Naive thymus-derived CD4-positive, alpha-beta T cell (primary cell): ENCODE measurements at regions of chr7 and their contacts with region 1.

Region 1: DNA sequence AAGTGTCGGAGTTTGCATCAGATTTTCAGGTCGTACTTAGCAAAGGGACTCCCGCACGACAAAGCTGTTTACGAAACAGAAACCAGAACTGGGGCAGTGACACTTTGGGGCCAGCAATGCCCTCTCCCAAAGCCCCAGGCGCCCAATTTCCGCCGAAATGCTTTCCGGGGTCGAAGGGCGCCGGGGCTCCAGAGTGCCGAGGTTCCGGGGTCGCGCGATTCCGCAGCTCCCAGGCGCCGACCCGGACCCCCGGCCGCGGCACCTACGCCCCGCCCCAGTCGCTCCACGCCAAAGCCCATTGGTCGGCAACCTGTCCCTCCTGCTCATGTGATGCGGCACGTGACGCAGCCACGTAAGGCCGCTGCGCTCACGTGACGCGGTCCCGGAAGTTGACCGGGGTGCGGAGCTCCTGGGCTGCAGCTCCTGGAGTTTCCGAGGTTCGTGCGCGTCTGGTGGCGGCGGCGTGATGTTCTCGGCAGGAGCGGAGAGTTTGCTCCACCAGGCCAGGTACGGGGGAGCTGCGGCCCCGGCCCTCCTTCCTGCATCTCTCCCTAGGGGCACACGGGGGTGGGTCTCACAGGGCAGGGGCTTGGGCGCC is at the start of gene AP5Z1:
- DNase-seq: peak; percentile 85 to 95 (median 94)
- ATAC-seq: peak; percentile 95
- H3K4me3 ChIP-seq: peak within 1 kb of the TSS; percentile 95
- H3K4me3 Mint-ChIP-seq: peak within 1 kb of the TSS; percentile 93 to 99 (median 98)
- H3K27ac ChIP-seq: peak within 1 kb of the TSS; percentile 94
- H3K27ac Mint-ChIP-seq: peak within 1 kb of the TSS; percentile 93 to 99 (median 98)
- H3K4me1 ChIP-seq: peaks cover 28 to 31% of the 10 kb centered on the region in 2 donors
- H3K4me1 Mint-ChIP-seq: peaks cover 29 to 62% (median 44%) of the 10 kb centered on the region in 7 donors
- H3K27me3 ChIP-seq: no peaks in the 10 kb centered on the region
- H3K27me3 Mint-ChIP-seq: no peaks in the 10 kb centered on the region
- total RNA-seq, gene AP5Z1: 69.4 to 114 (median 90.1) TPM

Region 2: DNA sequence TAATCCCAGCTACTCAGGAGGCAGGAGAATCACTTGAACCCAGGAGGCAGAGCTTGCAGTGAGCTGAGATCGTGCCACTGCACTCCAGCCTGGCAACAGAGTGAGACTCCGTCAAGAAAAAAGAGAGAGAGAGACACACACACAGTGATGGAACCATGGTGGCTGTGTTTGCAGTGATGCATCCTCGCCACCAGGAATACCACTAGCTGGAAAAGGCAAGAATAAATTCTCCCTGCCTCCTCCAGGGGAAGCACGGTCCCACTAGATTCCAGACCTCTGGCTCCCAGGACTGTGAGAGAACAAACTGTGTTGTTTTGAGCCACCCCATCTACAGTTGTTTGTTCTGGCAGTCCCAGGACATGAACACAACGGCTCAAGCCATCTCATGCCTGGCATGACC is 413.6 kb before region 1 on chr7:
- CTCF ChIA-PET with region 1: no interaction called
- POLR2A ChIA-PET with region 1: no interaction called
- intact Hi-C with region 1: no loop called
- DNase-seq: no peak
- ATAC-seq: no peak
- H3K4me3 ChIP-seq: no peak overlapping the region
- H3K4me3 Mint-ChIP-seq: no peak overlapping the region
- H3K27ac ChIP-seq: no peak overlapping the region
- H3K27ac Mint-ChIP-seq: no peak overlapping the region
- H3K4me1 ChIP-seq: no peaks in the 10 kb centered on the region
- H3K4me1 Mint-ChIP-seq: no peaks in the 10 kb centered on the region
- H3K27me3 ChIP-seq: no peaks in the 10 kb centered on the region
- H3K27me3 Mint-ChIP-seq: peaks cover 0 to 31% (median 19%) of the 10 kb centered on the region in 5 donors

Region 3: DNA sequence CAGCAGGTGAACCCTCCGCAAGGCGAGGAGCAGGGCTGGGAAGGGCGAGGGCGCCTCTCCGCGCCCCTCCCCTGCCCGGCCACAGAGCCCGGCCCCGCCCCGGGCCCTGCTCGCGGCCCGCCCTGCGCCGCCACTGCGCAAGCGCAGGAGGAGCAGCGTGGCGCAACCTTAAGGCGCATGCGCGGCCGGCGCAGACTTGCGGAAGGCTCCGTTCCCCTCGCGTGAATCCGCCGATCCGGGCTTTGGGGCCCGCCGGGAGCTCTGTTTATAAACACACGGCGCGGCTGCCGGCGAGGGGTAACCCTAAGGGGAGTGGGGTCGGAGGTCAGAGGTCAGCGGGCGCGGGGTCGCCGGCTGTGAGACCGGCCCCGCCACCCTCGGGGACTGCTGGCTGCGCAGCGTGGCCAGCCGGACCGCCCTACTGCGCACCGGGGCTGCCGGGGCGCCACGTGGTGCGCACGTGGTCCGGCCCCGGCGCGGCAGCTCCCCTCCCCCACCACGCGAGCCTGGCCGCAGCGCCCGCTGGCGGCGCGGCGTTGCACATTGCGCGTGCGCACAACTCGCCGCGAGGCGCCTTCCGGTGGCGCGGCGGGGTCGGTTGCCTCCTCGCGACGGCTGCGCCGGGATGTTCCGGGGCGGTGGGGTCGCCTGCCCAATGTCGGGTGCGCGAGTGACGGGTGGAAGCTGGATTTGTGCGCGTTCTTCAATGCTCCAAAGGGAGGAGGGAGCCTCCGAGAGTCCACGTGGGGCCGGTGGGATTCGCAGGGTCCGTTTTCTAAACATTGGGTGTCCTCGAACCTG is 133.5 kb before region 1 on chr7:
- CTCF ChIA-PET with region 1: interaction called, 5 read pairs
- POLR2A ChIA-PET with region 1: interaction called, 26 read pairs
- intact Hi-C with region 1: loop called (anchors 1 kb)
- DNase-seq: peak; percentile 94 to 99 (median 98)
- ATAC-seq: peak; percentile 92
- H3K4me3 ChIP-seq: peak overlapping the region; percentile 85
- H3K4me3 Mint-ChIP-seq: peak overlapping the region; percentile 73 to 94 (median 90)
- H3K27ac ChIP-seq: peak overlapping the region; percentile 87
- H3K27ac Mint-ChIP-seq: peak overlapping the region; percentile 89 to 99 (median 97)
- H3K4me1 ChIP-seq: peaks cover 7 to 10% of the 10 kb centered on the region in 2 donors
- H3K4me1 Mint-ChIP-seq: peaks cover 5 to 26% (median 13%) of the 10 kb centered on the region in 7 donors
- H3K27me3 ChIP-seq: no peaks in the 10 kb centered on the region
- H3K27me3 Mint-ChIP-seq: no peaks in the 10 kb centered on the region

Region 4: DNA sequence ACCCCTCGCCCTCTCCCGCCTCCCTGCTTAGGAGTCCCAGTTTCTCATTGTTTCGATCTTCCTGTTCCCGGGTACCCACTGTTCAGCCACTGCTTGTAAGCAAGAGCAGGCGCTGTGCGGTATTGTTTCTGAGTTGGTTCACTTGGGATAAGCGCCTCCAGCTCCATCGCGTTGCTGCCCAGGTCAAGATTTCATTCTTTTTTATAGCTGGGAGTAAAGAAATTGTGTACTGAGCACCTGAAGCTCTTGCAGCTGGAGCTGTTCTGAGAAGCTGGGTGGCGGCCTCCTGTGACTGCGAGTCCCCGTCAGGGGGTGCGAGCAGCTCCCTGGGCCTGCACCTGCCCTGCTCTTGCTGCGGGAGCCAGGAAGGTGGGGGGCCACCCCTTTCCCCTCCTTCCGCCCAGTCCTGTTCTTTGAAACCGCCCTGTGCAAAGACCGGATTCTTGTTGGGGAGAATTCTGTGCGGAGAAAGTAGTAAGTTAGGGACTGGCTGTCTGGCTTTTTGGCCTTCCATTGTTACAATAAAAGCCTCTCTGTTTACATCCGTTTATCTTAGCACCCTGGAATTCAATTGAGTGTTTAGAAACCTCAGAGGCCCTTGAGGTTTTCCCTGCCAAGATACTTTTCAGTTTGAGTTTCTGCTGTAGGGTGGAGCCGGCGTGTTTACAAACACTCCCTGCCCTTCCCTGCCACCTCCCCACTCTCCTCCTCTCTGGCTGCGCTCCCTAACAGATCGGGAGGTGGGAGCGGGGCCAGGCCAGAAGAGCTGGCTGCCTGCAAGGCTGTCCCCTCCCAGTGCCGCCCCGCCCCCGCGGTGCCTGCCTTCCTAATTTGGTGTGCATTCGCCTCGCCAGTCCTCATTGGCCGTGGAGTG is 30.7 kb before region 1 on chr7:
- CTCF ChIA-PET with region 1: interaction called, 3 read pairs
- POLR2A ChIA-PET with region 1: interaction called, 43 read pairs
- intact Hi-C with region 1: loop called (anchors 1 kb)
- DNase-seq: peak; percentile 61 to 84 (median 80)
- ATAC-seq: peak; percentile 76
- H3K4me3 ChIP-seq: peak overlapping the region; percentile 65
- H3K4me3 Mint-ChIP-seq: peak overlapping the region; percentile 84 to 92 (median 88)
- H3K27ac ChIP-seq: peak overlapping the region; percentile 82
- H3K27ac Mint-ChIP-seq: peak overlapping the region; percentile 90 to 99 (median 96)
- H3K4me1 ChIP-seq: peaks cover 15 to 61% of the 10 kb centered on the region in 2 donors
- H3K4me1 Mint-ChIP-seq: peaks cover 45 to 89% (median 79%) of the 10 kb centered on the region in 7 donors
- H3K27me3 ChIP-seq: no peaks in the 10 kb centered on the region
- H3K27me3 Mint-ChIP-seq: no peaks in the 10 kb centered on the region

Region 5: DNA sequence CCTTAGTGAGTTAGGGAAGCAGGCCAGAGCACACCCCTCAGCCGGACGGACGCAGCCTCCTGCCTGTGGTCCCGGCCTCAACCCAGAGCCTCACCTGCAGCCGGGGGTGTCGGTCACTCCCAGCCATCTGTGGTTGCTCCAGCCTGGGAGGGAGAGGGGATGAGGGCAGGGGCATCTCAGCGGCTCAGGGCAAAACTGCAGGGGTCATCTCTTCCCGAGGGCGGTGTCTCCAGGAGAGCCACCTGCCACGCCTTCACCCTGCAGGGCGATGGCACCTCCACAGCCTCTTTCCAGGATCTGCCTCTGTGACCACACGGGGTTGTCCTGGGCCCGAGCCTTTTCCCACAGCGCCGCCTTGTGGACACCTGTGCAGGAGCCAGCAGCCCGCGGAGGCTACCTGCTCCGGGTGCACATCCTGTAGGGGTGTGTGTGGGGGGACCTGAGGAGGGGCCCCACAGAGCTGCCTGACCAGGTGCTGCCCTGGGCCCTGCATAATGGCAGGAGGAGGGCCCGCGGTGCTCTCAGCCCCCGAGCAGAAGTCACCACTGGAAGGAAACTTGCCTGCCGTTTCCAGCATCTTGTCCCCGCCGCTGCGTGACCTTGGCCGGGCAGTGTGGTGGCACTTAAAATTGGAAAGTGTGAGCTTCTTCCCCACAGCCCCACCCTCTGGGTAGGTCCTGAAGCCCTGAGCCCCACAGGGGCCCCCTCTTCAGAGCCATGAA is 21.5 kb before region 1 on chr7:
- CTCF ChIA-PET with region 1: no interaction called
- POLR2A ChIA-PET with region 1: interaction called, 13 read pairs
- intact Hi-C with region 1: loop called in 1 of 2 experiments (anchors 2 kb)
- DNase-seq: peak; percentile 67 to 90 (median 83)
- ATAC-seq: peak; percentile 97
- H3K4me3 ChIP-seq: no peak overlapping the region
- H3K4me3 Mint-ChIP-seq: peak overlapping the region in 4 of 10 donors; percentile 4 to 45 (median 19)
- H3K27ac ChIP-seq: peak overlapping the region; percentile 33
- H3K27ac Mint-ChIP-seq: peak overlapping the region in 3 of 9 donors; percentile 75 to 83 (median 81)
- H3K4me1 ChIP-seq: peaks cover 4 to 20% of the 10 kb centered on the region in 2 donors
- H3K4me1 Mint-ChIP-seq: peaks cover 4 to 41% (median 21%) of the 10 kb centered on the region in 7 donors
- H3K27me3 ChIP-seq: no peaks in the 10 kb centered on the region
- H3K27me3 Mint-ChIP-seq: no peaks in the 10 kb centered on the region

Region 6: DNA sequence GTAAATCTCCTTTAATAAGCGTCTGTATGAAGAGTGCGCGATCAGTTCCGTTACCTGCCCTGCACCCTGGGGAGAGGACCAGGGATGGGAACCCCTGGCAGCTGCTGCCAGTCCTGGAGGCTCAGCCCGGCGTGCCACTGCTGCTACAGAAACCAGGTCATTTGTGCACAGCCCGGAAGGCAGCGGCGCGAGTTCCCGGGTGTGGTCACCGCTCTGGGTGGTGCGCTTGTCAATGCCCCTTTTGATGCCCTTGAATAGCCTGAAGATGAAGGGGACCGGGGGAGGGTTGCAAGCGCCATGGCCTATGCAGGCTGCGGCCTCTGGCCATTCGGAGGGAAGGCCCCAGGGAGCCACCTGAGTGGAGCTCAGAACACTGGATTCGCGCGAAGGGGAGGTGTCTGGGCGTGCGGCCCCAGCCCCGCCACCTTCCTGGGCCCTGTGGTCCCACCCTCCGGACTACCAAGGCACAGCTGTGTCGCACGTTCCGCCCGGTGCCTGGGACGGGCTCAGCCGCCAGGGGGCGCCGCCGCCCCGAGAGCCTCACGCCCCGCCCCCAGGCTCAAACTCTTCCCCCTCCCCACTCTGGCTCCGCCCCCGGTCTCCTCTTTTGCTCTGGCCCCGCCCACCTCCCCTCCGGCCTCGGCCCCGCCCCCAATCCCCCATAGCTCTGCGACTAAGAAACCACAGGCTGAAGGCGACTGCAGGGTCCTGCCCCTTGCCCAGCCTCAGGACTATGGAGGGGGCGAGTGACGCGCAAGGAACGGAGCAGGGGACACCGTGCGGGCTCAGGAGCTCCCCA is 16.6 kb after region 1 on chr7:
- CTCF ChIA-PET with region 1: interaction called, 4 read pairs
- POLR2A ChIA-PET with region 1: interaction called, 32 read pairs
- intact Hi-C with region 1: loop called (anchors 1 kb)
- DNase-seq: peak; percentile 68 to 87 (median 79)
- ATAC-seq: peak; percentile 96
- H3K4me3 ChIP-seq: peak overlapping the region; percentile 37
- H3K4me3 Mint-ChIP-seq: peak overlapping the region in 8 of 10 donors; percentile 5 to 66 (median 42)
- H3K27ac ChIP-seq: peak overlapping the region; percentile 44
- H3K27ac Mint-ChIP-seq: peak overlapping the region in 2 of 9 donors; percentile 49 to 54
- H3K4me1 ChIP-seq: no peaks in the 10 kb centered on the region
- H3K4me1 Mint-ChIP-seq: peaks cover 0 to 8% (median 6%) of the 10 kb centered on the region in 7 donors
- H3K27me3 ChIP-seq: no peaks in the 10 kb centered on the region
- H3K27me3 Mint-ChIP-seq: no peaks in the 10 kb centered on the region

Region 7: DNA sequence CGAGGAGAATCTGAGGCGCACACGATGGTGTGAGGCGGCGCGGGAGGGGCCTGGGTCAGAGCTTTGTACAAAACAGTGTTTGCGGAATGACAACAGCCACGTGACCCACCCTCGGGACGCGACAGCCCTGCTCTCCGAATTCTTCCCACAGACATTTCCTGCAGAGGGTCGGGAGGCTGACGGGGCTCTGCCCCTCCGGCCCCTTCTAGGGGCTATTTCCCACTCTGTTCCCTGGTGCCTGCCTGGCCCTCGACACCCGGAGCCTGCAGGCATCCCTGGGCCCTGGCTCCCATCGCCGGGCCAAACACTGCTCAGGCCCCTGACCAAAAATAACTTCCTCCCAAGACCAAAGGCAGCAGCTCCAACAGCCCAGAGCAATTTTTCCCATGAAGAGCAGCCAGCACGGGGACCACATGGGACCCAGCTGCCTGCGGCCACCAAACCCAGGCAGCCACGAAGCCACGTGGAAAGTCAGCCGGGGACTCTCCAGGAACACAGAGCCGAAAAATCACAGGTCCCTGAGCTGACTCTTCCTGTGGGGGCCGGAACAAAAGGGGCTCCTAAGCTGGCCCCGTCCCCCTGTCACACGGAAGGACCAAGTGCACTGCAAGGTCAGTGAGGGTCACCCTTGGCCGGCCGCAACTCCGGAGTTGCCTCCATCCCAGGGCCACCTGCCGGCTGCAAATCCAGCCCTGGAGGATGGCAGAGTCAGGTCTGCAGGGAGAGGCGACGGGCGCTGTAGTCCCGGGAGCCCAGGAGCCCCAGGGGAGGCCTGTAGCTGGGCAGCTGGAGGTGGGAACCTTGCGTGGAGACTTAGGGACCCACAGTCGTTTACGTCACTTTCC is 44.4 kb after region 1 on chr7:
- CTCF ChIA-PET with region 1: no interaction called
- POLR2A ChIA-PET with region 1: no interaction called
- intact Hi-C with region 1: no loop called
- DNase-seq: no peak
- ATAC-seq: no peak
- H3K4me3 ChIP-seq: no peak overlapping the region
- H3K4me3 Mint-ChIP-seq: no peak overlapping the region
- H3K27ac ChIP-seq: no peak overlapping the region
- H3K27ac Mint-ChIP-seq: no peak overlapping the region
- H3K4me1 ChIP-seq: no peaks in the 10 kb centered on the region
- H3K4me1 Mint-ChIP-seq: peaks cover 0 to under 1% (median 0%) of the 10 kb centered on the region in 7 donors
- H3K27me3 ChIP-seq: no peaks in the 10 kb centered on the region
- H3K27me3 Mint-ChIP-seq: peaks cover 0 to 12% (median 5%) of the 10 kb centered on the region in 5 donors

Region 8: GRCh38 chr7:5045558-5046396 is 270.4 kb after region 1 on chr7 and contains the start of gene RBAK:
- CTCF ChIA-PET with region 1: no interaction called
- POLR2A ChIA-PET with region 1: no interaction called
- intact Hi-C with region 1: loop called (anchors 1 to 5 kb)
- DNase-seq: peak; percentile 74 to 91 (median 86)
- ATAC-seq: peak; percentile 100
- H3K4me3 ChIP-seq: peak within 1 kb of the TSS; percentile 76
- H3K4me3 Mint-ChIP-seq: peak within 1 kb of the TSS; percentile 92 to 98 (median 96)
- H3K27ac ChIP-seq: peak within 1 kb of the TSS; percentile 95
- H3K27ac Mint-ChIP-seq: peak within 1 kb of the TSS; percentile 82 to 97 (median 92)
- H3K4me1 ChIP-seq: peaks cover 4 to 7% of the 10 kb centered on the region in 2 donors
- H3K4me1 Mint-ChIP-seq: peaks cover 16 to 57% (median 51%) of the 10 kb centered on the region in 7 donors
- H3K27me3 ChIP-seq: no peaks in the 10 kb centered on the region
- H3K27me3 Mint-ChIP-seq: peaks cover 0 to 2% (median 0%) of the 10 kb centered on the region in 5 donors
- total RNA-seq, gene RBAK: 11.8 to 21.8 (median 17.5) TPM

Region 9: GRCh38 chr7:5077740-5078139 is 302.4 kb after region 1 on chr7:
- CTCF ChIA-PET with region 1: no interaction called
- POLR2A ChIA-PET with region 1: no interaction called
- intact Hi-C with region 1: no loop called
- DNase-seq: no peak
- ATAC-seq: no peak
- H3K4me3 ChIP-seq: no peak overlapping the region
- H3K4me3 Mint-ChIP-seq: peak overlapping the region in 2 of 10 donors; percentile 15 to 49
- H3K27ac ChIP-seq: no peak overlapping the region
- H3K27ac Mint-ChIP-seq: peak overlapping the region in 3 of 9 donors; percentile 31 to 72 (median 42)
- H3K4me1 ChIP-seq: no peaks in the 10 kb centered on the region
- H3K4me1 Mint-ChIP-seq: peaks cover 0 to 16% (median 9%) of the 10 kb centered on the region in 7 donors
- H3K27me3 ChIP-seq: no peaks in the 10 kb centered on the region
- H3K27me3 Mint-ChIP-seq: peaks cover 0 to 34% (median 8%) of the 10 kb centered on the region in 5 donors

Region 10: DNA sequence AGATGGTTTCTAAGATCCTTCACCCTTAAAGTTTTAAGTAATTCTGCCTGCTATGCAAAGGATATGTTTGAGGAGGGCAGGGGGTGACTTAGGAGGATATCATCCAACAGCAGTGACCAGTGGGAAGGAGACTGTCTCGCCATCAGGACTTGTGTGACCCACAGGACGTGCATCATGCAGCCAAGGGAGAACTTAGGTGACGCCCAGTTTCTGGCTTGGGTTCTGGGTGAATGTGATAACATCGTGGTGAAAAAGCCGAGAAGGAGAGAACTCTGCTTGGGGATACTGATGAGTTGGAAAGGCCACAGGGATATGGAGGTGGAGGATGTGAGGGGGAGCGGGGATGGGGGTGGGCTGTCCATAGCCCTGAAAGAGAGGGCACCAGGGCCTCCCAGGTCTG is 418.5 kb after region 1 on chr7:
- CTCF ChIA-PET with region 1: no interaction called
- POLR2A ChIA-PET with region 1: no interaction called
- intact Hi-C with region 1: loop called in 1 of 2 experiments (anchors 5 kb)
- DNase-seq: no peak
- ATAC-seq: no peak
- H3K4me3 ChIP-seq: no peak overlapping the region
- H3K4me3 Mint-ChIP-seq: peak overlapping the region in 1 of 10 donors; percentile 42
- H3K27ac ChIP-seq: no peak overlapping the region
- H3K27ac Mint-ChIP-seq: peak overlapping the region in 2 of 9 donors; percentile 14 to 37
- H3K4me1 ChIP-seq: peaks cover 14 to 19% of the 10 kb centered on the region in 2 donors
- H3K4me1 Mint-ChIP-seq: peaks cover 24 to 54% (median 42%) of the 10 kb centered on the region in 7 donors
- H3K27me3 ChIP-seq: no peaks in the 10 kb centered on the region
- H3K27me3 Mint-ChIP-seq: no peaks in the 10 kb centered on the region